Activated CD8-positive, alpha-beta memory T cell treated with anti-CD3 and anti-CD28 coated beads, Interleukin-2, amount 10 ng/mL, durations not matched to agents 7 days and 5 days (primary cell): ENCODE measurements at regions of chr17 and their contacts with region 1.

Region 1: GRCh38 chr17:68435876-68436842 is 21.1 kb downstream of the WIPI1 start:
- DNase-seq: peak; percentile 91
- ATAC-seq: peak; percentile 73
- H3K4me3 Mint-ChIP-seq: peak overlapping the region; percentile 26
- H3K27ac Mint-ChIP-seq: peak overlapping the region; percentile 98
- H3K4me1 Mint-ChIP-seq: peaks cover 50% of the 10 kb centered on the region
- H3K27me3 Mint-ChIP-seq: no peaks in the 10 kb centered on the region

Region 2: DNA sequence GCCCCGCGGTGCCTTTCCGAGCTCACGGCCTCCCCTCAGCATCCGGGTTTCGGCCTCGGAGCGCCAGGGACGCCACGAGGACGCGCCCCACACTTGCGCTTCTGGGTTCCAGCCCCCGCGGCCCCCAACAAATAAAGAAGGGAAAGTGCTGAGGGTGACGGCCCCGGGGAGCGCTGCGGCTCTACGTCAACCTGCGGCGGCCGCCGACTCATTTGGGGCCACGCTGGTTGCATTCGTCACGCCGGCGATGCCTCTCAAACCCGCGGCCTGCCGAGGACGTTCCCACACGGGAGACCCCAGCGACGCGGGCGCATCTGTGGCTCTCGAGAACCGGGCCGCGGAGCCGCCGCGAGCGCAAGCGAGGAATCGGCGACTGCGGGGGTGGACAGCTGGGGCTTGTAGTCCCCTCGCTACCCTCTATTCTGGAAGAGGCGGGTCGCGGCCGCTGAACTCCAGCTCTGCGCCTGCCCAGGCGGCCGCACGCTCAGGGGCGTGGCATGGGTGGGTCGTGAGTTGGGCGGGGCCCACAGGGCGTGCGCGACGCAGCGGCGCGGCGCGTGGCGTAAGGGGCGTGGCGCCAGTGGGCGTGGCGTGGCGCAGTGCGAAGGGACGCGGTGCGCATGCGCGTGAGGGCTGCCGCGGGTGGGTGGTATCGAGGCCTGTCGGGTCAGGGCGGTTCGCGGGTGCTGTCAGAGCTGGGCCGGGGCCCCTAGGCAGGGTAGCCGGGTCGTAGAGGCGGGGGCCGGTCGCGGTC is 188.5 kb before region 1 on chr17 and contains the start of gene AMZ2:
- CTCF ChIA-PET with region 1: interaction called, 12 read pairs
- DNase-seq: peak; percentile 96
- ATAC-seq: peak; percentile 90
- H3K4me3 Mint-ChIP-seq: peak within 1 kb of the TSS; percentile 81
- H3K27ac Mint-ChIP-seq: peak within 1 kb of the TSS; percentile 91
- H3K4me1 Mint-ChIP-seq: peaks cover 48% of the 10 kb centered on the region
- H3K27me3 Mint-ChIP-seq: no peaks in the 10 kb centered on the region
- total RNA-seq, gene AMZ2: 106 to 107 TPM

Region 3: DNA sequence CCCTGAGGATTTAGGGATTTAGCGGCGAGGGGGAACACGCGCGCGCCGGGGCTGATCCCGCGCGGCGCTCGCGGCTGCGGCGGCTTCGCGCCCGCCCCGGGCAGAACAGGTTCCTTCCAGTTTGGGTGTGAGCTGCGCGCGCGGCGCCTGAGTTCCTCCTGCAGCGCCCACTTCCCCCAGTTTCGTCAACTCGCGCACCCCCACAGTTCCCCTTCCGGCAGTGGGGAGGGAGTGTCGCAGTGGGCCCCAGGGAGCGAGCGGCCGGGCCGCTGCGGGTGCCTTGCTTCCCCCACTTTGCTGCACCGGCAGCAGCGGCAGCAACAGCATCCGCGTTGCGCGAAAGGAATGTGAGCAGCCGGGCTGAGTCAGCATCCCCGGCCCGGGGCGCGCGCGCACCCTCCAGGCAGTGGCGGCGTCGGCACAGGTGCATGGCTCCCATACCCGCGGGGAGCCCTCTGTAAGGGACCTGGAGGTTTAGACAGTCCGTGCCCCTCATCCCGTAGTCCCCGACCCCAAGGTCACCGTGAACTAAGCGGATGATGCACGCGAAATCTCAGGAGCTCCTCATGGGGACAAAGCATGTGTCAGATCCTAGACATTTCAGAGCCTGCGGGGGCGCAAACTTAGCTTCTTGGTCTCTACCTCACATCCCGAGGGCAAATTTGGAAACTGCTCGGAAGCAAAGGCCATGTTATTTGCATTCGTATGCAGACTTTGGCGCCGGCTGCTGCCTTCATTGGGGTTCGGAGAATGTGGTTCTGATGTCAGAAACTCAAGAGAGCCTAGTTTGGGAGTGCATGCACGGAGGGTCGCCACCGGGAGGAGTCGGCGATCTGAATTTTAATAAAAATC is 144.1 kb before region 1 on chr17:
- CTCF ChIA-PET with region 1: interaction called, 22 read pairs
- DNase-seq: peak; percentile 98
- ATAC-seq: peak; percentile 81
- H3K4me3 Mint-ChIP-seq: peak overlapping the region; percentile 81
- H3K27ac Mint-ChIP-seq: peak overlapping the region; percentile 96
- H3K4me1 Mint-ChIP-seq: peaks cover 68% of the 10 kb centered on the region
- H3K27me3 Mint-ChIP-seq: peaks cover 2% of the 10 kb centered on the region

Region 4: DNA sequence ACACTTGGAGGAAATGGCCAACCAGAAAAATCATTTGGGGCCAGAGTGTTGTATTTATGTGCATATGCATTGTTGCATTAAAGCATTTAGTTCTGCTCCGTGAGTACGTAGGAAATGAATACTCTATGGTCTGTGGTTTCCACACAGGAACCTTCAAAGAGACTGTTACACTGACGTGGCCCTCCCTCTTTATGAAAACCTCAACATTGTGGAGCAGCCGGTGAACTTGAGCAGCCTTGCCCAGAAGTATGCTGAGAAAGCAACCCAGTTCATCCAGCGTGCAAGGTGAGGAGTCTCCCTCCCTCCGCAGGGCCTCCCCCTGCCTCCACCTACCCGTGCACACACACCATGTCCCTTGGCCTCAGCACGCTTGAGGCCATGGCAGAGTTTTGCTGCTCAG is 79.6 kb before region 1 on chr17:
- CTCF ChIA-PET with region 1: interaction called, 16 read pairs
- DNase-seq: peak; percentile 92
- ATAC-seq: peak; percentile 90
- H3K4me3 Mint-ChIP-seq: peak overlapping the region; percentile 74
- H3K27ac Mint-ChIP-seq: peak overlapping the region; percentile 95
- H3K4me1 Mint-ChIP-seq: peaks cover 79% of the 10 kb centered on the region
- H3K27me3 Mint-ChIP-seq: no peaks in the 10 kb centered on the region

Region 5: DNA sequence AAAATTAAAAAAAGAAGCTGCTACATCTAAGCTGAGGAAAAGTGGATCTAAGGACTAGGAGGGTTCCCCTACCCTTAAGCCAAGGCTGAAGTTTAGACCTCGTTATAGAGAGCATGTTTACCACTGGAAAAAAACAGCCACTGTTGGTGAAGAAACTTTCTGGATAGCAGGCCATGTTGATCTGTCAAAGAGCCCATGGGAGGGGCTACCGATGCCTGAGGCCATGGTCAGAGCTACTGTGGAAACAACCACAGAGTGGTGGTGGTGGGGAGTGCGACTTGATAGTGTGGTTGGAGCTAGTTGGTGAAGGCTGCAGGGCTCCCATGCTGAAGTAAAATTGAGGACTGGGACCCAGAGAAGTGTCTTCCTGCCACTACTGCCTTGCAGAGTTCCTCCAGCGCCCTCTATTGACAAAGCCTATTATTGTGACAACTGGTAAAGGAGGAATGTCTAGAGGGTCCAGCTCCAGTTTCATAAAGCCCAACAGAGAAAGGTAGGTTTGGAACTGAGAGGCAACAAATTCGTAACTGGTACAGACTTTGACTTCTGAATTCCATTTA is 177.7 kb after region 1 on chr17:
- CTCF ChIA-PET with region 1: no interaction called
- DNase-seq: peak; percentile 57
- ATAC-seq: peak; percentile 75
- H3K4me3 Mint-ChIP-seq: no peak overlapping the region
- H3K27ac Mint-ChIP-seq: no peak overlapping the region
- H3K4me1 Mint-ChIP-seq: no peaks in the 10 kb centered on the region
- H3K27me3 Mint-ChIP-seq: peaks cover 39% of the 10 kb centered on the region